Left ventricle myocardium inferior (tissue), 1 donor: ENCODE measurements at regions of chr15 and their contacts with region 1.

Region 1: DNA sequence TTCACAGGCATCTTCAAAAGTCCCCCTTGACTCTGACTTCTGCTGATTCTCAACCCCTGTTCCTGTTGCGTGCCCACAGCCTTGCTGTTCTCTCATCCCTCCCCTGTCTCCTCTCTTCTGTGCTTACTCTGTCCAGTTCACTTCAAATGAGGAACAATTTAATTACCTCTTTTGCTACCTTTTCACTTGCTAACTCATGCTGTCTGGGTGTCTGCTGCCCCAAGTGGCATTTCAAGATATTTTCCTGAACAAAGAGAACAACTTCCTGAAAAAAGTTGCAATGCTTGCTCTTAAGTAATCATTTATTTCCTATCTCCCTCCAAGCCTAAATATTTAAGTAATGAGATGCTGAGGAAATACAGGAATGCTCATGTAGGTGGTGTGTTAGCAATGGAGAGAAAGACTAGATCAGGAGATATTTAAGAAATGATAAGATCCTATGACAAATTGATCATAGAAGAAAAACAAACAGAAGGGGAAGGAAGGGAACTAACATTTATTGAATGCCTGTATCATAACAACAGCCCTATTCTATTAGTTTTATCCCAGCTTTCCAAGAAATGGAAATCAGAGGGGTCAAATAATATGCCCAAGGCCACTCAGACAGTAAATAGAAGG is 42.2 kb downstream of the SV2B start:
- DNase-seq: no peak
- H3K4me3 ChIP-seq: no peak overlapping the region
- H3K27ac ChIP-seq: no peak overlapping the region
- H3K4me1 ChIP-seq: no peaks in the 10 kb centered on the region
- H3K27me3 ChIP-seq: no peaks in the 10 kb centered on the region
- CTCF ChIP-seq: peak; percentile 55

Region 2: DNA sequence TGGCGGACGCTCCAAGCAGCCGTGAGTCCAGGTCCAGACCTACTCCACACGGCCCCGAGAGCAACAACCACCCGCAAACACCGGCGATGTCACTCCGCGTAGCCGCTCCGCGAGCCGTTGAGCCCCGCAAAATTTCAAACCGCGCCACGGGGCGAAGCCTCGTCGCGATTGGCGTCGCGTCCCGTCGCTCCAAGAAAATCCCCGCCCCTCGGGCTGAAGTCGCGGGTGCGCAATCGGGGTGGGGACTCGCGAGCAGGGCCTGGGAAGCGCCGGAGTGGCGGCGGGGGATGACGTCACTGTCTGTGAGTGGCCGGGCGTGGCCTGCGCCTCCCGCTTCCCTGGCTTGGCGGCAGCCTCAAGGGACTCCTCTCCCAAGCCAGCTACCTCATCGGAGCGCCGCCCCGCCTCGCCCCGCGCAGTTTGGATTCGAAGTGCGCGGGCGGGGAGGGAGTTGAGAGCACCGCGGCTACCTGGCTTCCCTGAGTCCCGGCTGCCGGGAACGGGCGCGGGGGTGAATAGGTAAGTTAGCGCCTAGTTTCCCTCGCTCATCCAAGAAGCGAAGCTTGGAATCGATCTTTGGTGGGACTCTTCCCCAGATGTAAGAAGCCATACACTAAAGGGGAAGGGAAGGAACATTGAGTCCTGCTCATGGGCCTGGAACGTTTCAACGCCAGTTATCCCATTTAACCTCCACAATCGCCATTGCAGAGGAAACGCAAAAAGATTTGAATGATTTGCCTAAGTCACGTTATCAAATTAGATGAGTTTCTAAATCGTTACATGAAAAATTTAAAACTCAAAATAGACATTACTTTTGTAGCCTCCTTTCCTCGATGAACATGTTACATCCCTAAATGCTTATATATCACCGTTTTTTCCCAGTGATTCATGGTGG is 147.6 kb before region 1 on chr15 and contains the start of gene PRC1:
- intact Hi-C with region 1: no loop called
- DNase-seq: peak; percentile 99
- H3K4me3 ChIP-seq: peak within 1 kb of the TSS; percentile 92
- H3K27ac ChIP-seq: peak within 1 kb of the TSS; percentile 91
- H3K4me1 ChIP-seq: peaks cover 21% of the 10 kb centered on the region
- H3K27me3 ChIP-seq: no peaks in the 10 kb centered on the region
- CTCF ChIP-seq: no peak
- total RNA-seq, gene PRC1: 3.4 TPM

Region 3: DNA sequence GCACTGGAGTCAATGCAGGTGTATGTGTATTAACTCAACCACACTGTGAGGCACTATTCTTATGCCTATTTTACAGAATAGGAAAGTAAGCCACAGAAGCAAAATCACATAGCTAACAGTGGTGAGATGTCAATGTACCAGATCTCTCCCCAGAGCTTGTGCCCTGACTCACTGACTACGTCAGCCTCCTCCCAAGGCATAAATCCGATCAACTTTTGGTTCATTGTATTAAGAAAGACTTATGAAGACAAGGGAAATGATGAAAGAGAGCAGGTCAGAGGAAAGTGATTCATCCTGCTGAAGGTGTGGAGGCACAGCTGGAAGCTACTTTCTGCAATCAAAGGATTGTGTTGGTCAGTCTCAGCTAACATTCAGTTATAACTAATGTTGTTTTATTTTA is 75.2 kb before region 1 on chr15:
- intact Hi-C with region 1: loop called (anchors 10 kb)
- DNase-seq: no peak
- H3K4me3 ChIP-seq: no peak overlapping the region
- H3K27ac ChIP-seq: no peak overlapping the region
- H3K4me1 ChIP-seq: no peaks in the 10 kb centered on the region
- H3K27me3 ChIP-seq: peaks cover 20% of the 10 kb centered on the region
- CTCF ChIP-seq: no peak

Region 4: DNA sequence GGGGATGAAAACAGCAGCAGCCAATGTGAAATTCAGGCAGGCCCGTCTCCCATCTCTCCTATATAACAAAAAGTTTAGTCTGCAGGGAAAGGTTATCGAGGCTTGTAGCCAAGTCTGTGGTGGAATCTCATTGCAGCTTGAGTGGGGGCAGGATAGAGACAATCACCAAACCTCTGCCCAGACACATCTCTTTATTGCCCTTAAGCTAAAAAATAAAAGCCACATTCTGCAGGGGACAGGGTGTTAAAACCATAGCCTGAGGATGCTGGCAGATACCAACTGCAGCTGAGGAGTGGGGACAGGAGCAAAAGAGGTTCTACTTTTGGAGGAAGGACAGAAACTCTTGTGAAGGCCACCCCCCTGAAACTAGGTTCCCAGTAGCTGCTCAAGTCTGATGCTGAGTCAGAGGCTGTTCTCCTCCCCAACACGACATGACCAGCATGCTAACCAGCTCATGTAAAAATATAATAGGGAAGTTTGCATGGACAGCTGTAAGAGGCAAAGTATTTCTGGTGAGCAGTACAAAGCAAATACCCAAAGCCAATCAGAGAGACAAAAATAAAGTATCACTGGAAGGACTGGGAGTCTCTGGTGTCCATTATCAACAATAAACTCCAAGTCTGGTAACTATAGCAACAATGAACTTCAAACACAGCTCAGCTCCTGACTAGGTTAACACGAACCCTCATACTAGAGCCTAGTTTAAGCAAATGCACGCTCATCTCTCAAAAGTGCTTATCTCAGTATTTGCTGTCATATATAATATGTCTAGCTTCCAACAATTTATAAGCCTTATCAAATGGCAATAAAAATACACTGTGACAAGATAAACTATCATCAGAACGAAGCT is 349.1 kb after region 1 on chr15:
- intact Hi-C with region 1: no loop called
- DNase-seq: no peak
- H3K4me3 ChIP-seq: no peak overlapping the region
- H3K27ac ChIP-seq: no peak overlapping the region
- H3K4me1 ChIP-seq: no peaks in the 10 kb centered on the region
- H3K27me3 ChIP-seq: no peaks in the 10 kb centered on the region
- CTCF ChIP-seq: no peak